ENCODE measurements at regions of chr1 and their contacts with region 1.

Region 1: DNA sequence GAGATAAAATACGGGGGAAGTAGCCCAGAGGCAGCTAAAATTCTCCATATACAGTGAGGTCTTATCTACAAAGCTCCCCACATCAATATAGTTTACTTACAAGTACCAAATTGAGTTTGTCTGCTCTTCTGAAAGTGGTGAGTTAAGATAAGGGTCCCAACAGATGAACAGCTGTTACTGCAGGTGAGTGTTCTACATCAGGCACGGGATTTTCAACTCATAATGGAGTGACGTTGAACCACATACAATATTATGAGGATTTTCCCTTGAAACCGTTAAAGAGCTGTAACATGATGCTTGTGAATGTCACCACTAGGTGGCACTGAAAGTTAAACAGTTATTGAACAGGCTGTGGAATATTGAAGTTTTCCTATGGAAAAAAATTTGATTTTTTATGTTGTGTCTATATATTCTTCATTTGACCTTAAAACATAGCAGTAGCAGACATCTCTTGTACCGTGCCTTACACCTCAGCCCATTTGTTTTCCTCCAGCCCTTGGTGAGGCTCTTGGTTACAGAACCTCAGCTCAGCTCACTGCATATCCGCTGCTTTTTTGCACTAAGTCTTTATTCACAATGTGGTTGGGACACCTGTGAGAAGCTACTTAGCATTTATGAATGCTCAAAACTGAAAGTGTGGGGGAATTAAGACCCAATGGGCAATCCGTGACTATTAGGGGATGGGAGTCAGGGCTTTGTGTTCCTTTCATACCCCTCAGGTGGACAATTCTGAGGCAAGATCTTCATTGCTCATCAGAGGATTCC is 23.2 kb downstream of the CD1D start:
- DNase-seq: no peak
- H3K4me3 ChIP-seq: no peak overlapping the region
- H3K27ac ChIP-seq: no peak overlapping the region
- H3K4me1 ChIP-seq: no peaks in the 10 kb centered on the region
- H3K27me3 ChIP-seq: no peaks in the 10 kb centered on the region
- CTCF ChIP-seq: peak; percentile 50 to 73 (median 64)
- EP300 ChIP-seq: no peak
- POLR2A ChIP-seq: no peak

Region 2: GRCh38 chr1:158998781-158999161 is 794.9 kb after region 1 on chr1:
- intact Hi-C with region 1: loop called (anchors 1 kb)
- DNase-seq: peak; percentile 74
- H3K4me3 ChIP-seq: peak overlapping the region; percentile 36 to 52 (median 44)
- H3K27ac ChIP-seq: peak overlapping the region; percentile 81 to 86 (median 84)
- H3K4me1 ChIP-seq: peaks cover 0 to 32% (median 22%) of the 10 kb centered on the region in 4 donors
- H3K27me3 ChIP-seq: no peaks in the 10 kb centered on the region
- CTCF ChIP-seq: peak; percentile 80 to 92 (median 86)
- EP300 ChIP-seq: no peak
- POLR2A ChIP-seq: no peak

Measured in sigmoid colon (tissue), 7 donors.